Left ventricle myocardium superior (tissue), 1 donor: ENCODE measurements at regions of chr4 and their contacts with region 1.

Region 1: GRCh38 chr4:7192252-7193029 is at the start of gene SORCS2:
- DNase-seq: peak; percentile 86
- ATAC-seq: peak; percentile 91
- total RNA-seq, gene SORCS2: 1.5 TPM

Region 2: GRCh38 chr4:6857009-6857882 is 335.2 kb before region 1 on chr4:
- intact Hi-C with region 1: no loop called
- DNase-seq: no peak
- ATAC-seq: peak; percentile 47

Region 3: GRCh38 chr4:7295911-7296660 is 103.6 kb after region 1 on chr4:
- intact Hi-C with region 1: loop called (anchors 10 kb)
- DNase-seq: peak; percentile 64
- ATAC-seq: peak; percentile 65